ENCODE measurements at regions of chr4 and their contacts with region 1.

Region 1: DNA sequence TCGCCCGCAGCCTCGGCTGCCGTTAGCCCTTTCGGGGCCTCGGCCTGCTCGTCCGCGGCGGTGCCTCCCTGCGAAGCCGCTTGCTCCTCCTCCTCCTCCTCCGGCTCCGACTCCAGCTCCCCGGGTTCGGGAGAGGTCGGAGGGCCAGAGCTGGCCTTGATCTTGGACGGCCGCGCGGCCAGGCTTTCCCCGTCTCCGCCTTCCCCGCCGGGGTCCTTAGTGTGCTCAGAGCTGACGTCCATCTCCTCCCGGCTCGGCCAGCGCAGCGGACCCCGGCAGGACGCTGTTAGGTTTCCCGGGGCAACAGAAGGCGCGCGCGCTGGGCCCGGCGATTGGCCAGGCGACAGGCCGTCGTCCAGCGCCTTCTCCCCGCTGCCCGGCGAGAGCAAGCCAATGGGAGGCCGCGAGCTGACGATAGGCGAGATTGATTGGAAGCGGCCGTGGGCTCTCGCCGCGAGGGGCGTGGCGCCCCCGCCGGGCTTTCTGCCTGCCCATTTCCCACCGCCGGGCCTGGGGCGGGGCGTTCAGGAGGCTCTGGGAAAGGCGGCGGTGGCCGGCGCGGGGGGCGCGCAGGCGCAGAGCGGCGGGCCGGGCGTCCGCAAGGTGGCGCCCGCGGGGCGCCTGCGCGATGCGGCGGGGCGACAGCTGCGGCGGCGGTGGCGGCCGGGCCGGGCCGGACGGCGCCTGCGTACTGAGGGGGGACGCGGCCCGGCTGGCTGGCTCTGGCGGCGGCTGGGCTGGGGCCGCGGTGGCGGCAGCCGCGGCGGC is at the start of gene TADA2B:
- DNase-seq: peak; percentile 98
- H3K4me3 Mint-ChIP-seq: peak within 1 kb of the TSS; percentile 88
- H3K27ac Mint-ChIP-seq: peak within 1 kb of the TSS; percentile 85
- H3K4me1 Mint-ChIP-seq: peaks cover 39% of the 10 kb centered on the region
- H3K27me3 Mint-ChIP-seq: no peaks in the 10 kb centered on the region
- CTCF ChIP-seq: peak; percentile 29
- total RNA-seq, gene TADA2B: 29.5 and 31.8 TPM in 2 replicates

Region 2: DNA sequence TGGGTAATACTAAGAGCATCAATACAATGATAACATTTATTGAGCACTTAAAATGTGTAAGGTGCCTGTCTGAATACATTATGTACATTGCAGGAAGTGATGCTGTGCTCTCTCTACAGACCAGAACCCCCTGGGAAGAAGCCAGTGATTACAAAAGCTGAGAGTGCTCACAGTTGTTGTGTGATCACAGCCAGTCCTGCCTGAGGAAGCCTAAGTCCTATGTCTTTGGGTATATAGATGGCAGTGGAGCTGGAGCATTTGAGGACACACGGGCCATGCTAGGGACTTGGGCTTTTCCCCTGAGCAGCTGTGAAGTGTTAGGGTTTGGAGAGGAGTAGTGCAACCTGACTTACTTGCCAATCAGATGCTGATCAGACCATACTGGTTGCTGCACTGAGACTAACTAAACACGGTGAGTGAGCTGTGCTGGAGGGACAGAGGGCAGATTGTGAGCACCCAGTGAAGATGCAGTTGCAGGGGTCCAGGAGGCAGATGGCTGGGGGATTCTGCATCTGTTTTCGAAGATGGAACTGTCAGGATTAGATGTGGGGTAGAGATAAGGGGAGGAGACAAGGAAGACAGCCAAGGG is 194.1 kb before region 1 on chr4:
- CTCF ChIA-PET with region 1: no interaction called
- POLR2A ChIA-PET with region 1: no interaction called
- intact Hi-C with region 1: no loop called
- DNase-seq: no peak
- H3K4me3 Mint-ChIP-seq: no peak overlapping the region
- H3K27ac Mint-ChIP-seq: no peak overlapping the region
- H3K4me1 Mint-ChIP-seq: no peaks in the 10 kb centered on the region
- H3K27me3 Mint-ChIP-seq: no peaks in the 10 kb centered on the region
- CTCF ChIP-seq: no peak

Region 3: DNA sequence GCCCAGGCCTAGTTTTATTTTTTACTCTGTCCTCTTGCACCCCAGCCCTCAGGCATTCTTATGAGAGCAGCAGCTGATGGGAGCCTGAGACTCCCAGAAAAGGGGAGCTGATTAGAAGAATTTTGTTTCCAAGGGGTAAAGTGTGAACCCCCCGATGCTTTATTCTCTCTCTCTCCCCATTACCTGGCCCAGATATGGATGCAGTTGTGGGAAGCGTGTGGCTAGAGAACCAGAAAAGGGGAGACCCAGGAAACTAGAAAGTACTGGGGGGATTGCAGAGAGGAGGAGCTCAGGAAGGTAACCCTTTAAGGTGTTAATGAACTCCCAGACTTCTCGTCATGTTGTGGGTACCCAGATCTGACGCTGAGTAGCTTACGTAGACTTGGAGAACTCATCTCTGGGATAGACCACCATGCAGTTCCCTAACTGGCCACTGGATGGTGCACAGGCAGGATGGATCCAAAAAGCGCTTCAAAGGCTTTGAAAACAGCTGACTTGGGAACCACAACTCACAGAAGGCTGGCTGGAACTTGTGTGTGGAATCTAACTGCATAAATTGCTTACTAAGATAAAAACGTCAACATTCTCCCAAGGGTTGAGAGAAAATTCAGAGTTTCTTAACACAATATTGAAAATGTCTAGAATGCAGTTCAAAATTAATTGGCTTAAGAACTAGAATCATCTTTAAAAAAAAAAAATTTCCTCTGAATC is 68.6 kb before region 1 on chr4:
- CTCF ChIA-PET with region 1: interaction called, 9 read pairs
- POLR2A ChIA-PET with region 1: interaction called, 9 read pairs
- intact Hi-C with region 1: loop called (anchors 5 kb)
- DNase-seq: peak; percentile 87
- H3K4me3 Mint-ChIP-seq: no peak overlapping the region
- H3K27ac Mint-ChIP-seq: no peak overlapping the region
- H3K4me1 Mint-ChIP-seq: no peaks in the 10 kb centered on the region
- H3K27me3 Mint-ChIP-seq: no peaks in the 10 kb centered on the region
- CTCF ChIP-seq: peak; percentile 95

Region 4: DNA sequence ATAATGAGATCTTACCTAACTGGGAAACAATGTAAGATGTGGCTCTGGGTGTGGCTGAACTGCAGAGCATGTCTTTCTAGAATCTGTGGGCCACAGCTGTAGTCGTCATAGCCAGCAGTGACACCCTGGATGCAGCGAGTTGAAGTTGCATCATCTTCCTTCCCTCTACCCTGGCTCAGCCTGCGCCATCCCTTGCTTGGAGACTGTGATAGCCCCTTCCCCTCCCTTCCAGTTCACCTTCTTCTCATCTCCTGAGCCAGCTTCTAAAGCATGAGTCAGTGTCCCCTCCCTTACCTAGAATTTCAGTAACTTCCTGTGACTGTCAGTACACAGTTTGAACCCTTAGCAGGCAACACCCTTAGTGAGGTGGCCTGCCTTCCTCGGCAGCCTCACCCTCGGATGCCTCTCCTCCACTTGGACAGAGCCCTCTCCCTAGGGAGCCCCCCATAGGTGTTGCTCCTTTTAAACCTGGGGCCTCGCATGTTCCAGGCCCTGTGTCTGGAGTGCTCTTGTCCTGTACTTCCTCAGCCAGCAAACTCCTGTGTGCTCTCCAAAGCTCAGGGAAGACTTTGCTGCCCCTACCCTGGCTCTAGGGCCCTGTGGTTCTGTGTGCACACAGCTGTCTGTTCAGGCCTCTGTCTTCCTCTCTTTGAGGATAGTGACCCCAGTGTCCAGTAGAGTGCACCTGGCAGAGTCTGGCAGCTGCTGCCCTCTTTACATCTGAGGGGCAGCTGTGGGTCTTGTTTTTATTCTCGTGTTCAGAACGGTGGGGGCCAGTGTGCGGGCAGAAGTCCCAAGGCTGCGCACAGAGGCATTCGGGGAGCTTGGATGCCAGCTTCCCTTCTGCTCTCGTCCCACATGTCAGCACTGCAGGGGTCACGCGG is 43.5 kb before region 1 on chr4:
- CTCF ChIA-PET with region 1: interaction called, 4 read pairs
- POLR2A ChIA-PET with region 1: interaction called, 47 read pairs
- intact Hi-C with region 1: loop called (anchors 1 kb)
- DNase-seq: peak; percentile 88
- H3K4me3 Mint-ChIP-seq: peak overlapping the region; percentile 29
- H3K27ac Mint-ChIP-seq: peak overlapping the region; percentile 80
- H3K4me1 Mint-ChIP-seq: peaks cover 29% of the 10 kb centered on the region
- H3K27me3 Mint-ChIP-seq: no peaks in the 10 kb centered on the region
- CTCF ChIP-seq: no peak